Activated naive CD4-positive, alpha-beta T cell treated with anti-CD3 and anti-CD28 coated beads for 36 hours (primary cell): ENCODE measurements at regions of chr11 and their contacts with region 1.

Region 1: DNA sequence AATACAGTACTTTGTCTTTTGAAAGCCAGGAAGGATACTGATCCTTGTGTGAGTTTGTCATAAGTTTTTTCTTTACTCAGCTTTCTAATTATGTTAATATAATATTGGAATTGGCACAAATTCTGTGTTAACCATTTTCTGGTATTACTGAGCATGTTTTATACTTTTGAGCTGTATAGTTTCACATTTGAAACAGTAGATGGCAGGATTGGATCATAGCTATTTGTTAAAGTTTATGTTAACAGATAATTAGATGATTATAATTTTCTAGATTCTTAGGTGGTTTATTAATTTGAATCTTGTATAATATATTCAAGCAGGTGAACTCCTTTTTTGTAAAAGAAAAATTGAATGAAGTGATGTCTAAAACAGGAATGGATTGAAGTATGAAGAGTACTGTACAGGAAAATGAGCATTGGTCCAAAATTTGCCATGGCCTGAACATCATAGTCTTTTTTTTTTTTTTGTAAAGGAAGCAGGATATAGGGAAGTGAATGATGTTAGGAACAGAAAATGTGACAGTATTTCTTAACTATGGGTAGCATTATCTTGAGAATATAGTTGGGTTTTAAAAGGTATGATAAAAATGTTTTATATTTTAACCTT is 102.0 kb downstream of the CYP2R1 start:
- DNase-seq: no peak
- H3K4me3 Mint-ChIP-seq: no peak overlapping the region
- H3K27ac Mint-ChIP-seq: no peak overlapping the region
- H3K4me1 Mint-ChIP-seq: peaks cover 6% of the 10 kb centered on the region
- H3K27me3 Mint-ChIP-seq: no peaks in the 10 kb centered on the region

Region 2: DNA sequence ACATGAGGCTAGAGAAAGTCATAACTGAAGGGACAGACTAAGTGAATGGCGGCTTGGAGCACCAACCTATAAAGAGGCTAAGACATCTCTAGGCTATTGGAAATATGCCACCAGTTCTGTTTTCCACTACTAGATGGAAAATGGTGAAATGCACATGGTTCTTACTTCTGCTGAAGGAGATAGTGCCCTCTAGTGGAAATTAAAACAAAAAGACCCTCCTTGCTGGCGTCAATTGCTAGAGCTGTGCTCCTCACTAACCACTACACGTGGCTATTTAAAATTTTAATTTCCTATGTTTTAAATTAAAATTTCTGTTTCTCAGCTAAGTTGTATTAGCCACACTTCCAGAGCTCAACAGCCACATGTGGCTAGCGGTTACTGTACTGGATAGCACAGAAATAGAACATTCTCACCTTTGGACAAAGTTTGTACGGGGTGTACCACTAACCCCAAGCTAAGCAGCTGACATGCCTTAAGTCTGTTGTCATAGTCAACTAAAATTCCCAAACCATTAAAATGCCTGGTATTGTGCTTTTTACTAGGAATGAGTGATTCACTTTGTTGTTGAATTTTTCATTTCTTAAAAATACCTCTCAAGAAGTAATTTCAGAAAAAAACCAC is 216.3 kb after region 1 on chr11:
- CTCF ChIA-PET with region 1: interaction called, 5 read pairs
- intact Hi-C with region 1: loop called (anchors 1 kb)
- DNase-seq: peak; percentile 10
- H3K4me3 Mint-ChIP-seq: no peak overlapping the region
- H3K27ac Mint-ChIP-seq: no peak overlapping the region
- H3K4me1 Mint-ChIP-seq: no peaks in the 10 kb centered on the region
- H3K27me3 Mint-ChIP-seq: peaks cover 27% of the 10 kb centered on the region